ENCODE measurements at regions of chr7 and their contacts with region 1.

Region 1: DNA sequence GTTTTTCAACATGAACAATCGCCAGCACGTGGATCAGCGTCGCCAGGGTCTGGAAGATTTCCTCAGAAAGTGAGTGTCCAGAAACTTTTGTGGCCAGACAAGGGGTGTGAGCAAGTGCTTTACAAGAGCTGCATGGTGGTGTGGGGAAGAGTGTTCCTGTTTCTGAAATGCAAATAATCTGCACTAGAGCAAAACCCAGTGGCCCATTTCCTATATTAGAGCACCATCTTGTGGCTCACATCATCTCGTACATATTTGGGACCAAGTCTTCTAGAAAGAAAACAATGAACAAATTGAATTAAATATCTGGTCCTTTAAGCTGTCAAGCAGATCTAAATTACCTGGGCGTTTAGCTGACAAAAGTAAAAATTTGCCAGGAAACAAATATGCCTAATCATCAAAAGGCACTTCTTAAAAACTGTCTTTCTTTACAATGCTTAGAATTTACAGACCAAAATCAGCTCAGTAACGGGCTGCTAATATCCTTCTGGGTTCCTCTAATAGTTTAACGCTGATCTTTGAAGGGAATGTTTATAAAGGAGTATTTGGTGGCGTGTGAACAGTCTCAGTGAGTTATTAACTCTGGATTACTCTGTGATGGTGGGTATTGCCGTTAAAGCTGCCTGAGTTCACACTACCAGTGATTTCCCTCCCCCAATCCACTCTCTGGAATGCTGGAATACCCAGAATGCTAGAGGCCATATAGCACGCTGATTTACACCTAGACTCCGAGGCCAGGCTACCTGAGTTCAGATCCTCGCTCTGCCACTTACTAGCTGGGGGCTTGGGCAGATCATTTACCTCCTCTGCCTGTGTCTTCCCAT is 73.6 kb downstream of the SNX10 start:
- DNase-seq: peak; percentile 63

Region 2: GRCh38 chr7:25894902-25895791 is 470.1 kb before region 1 on chr7:
- CTCF ChIA-PET with region 1: interaction called, 23 read pairs
- POLR2A ChIA-PET with region 1: interaction called, 4 read pairs
- DNase-seq: peak; percentile 75

Region 3: GRCh38 chr7:26167301-26167934 is 197.9 kb before region 1 on chr7:
- CTCF ChIA-PET with region 1: no interaction called
- POLR2A ChIA-PET with region 1: no interaction called
- DNase-seq: no peak

Region 4: GRCh38 chr7:26321435-26321834 is 43.9 kb before region 1 on chr7:
- CTCF ChIA-PET with region 1: no interaction called
- POLR2A ChIA-PET with region 1: no interaction called
- DNase-seq: no peak

Region 5: DNA sequence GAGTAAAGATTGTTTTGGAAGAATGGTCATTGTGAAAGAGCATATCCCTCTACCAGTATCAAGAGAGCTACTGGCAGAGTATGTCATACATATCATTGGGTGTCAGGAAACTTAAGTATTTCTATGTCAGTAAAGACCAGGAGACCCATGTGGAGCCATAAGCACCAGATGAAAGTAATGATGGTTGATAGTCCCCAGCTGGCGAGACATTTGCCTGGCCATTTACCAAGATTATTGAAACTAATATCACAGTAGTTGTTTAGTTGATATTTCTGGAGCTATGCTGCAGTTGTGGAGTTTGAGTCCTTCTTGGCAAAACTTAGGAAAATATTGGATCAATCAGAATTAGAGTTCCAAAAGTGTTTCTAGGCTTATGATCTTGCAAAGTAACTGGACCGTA is 41.1 kb after region 1 on chr7:
- CTCF ChIA-PET with region 1: no interaction called
- POLR2A ChIA-PET with region 1: no interaction called
- DNase-seq: no peak

Region 6: DNA sequence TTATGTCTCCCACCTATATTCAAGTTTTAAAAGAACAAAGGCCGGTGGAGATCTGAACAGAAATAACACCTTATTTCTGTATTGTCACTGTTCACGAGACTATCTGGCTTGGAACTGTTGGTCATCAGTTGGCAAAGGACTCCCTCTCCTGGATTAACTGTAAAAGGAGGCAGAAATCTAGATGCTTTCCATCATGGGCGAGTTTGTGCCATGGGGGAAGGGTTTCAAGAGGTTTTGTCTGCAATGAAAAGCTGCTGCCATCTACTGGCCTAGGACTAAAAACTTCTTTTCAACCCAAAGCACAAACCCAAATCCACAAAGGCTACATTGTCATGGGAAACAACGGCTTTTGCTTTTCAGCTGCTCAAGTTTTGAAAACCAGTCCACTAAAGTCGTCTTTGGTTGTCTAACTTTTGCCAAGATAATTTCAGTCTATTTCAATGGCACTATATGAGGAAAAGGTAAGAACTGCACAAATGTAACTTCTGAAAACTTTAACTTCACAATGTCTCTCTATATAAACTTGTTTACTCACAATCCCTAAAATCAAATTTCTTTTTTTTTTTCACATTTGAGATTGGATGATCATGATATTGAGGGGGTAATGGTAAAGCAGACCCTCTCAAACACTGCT is 302.3 kb after region 1 on chr7:
- CTCF ChIA-PET with region 1: interaction called, 17 read pairs
- POLR2A ChIA-PET with region 1: no interaction called
- DNase-seq: peak; percentile 76

Region 7: DNA sequence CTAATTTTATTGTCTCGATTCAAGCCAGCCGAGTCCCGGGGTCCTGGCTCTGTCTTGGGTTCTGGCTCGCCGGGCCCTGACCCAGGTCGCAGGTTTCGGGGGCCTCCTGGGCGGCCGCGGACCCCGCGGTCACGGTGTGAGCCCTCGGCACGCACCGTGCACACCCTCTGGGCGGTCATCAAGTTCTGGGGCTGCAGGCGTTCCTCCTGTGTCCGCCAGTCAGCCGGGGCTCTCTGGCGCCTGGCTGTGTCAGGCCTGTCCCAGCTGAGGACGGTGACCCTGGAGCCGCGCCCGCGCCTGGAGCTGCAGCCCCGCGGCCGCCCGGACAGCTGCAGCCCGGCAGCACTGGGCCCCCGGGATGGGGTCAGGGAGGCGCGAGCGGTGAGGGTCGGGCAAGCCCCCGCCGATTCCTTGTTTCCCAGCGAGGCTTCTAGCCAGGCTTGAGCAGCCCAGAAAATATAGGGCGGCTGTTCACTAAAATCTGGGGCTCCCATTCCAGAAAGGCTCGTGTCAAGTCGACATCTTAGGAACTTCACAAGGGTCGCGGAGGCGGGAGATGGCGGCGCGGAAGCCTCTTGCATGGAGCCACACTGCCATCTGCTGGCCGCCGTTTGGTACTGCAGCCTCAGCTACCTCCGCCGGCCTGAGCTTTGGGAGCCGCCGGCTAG is 795.4 kb after region 1 on chr7:
- CTCF ChIA-PET with region 1: interaction called, 23 read pairs
- POLR2A ChIA-PET with region 1: interaction called, 7 read pairs
- DNase-seq: peak; percentile 61